ENCODE measurements at regions of chr2 and their contacts with region 1.

Region 1: DNA sequence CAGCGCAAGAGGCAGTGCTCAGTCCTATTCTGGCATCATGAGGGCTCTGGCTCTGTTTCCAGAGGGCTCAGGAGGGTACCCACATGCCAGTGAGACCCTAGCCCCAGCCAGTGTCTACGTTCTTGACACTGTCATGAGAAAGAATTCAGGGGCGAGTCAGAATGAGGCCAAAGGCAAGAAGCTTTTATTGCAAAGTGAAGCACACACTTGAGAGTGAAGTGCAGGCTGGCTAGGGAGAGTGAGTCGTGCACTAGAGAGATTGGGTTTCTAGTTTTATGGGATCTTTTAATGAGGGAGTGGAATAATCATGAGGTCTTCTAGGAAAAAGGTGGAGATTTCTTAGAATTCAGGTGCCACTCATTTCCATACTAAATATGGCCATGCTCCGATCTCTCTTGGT is 164.1 kb downstream of the DCDC2C start:
- DNase-seq: no peak
- ATAC-seq: no peak
- H3K4me3 ChIP-seq: no peak overlapping the region
- H3K27ac ChIP-seq: no peak overlapping the region
- H3K4me1 ChIP-seq: peaks cover 0 to 14% of the 10 kb centered on the region in 2 donors
- H3K27me3 ChIP-seq: no peaks in the 10 kb centered on the region

Region 2: GRCh38 chr2:3814706-3815245 is 52.7 kb before region 1 on chr2:
- intact Hi-C with region 1: no loop called
- DNase-seq: no peak
- ATAC-seq: no peak
- H3K4me3 ChIP-seq: no peak overlapping the region
- H3K27ac ChIP-seq: no peak overlapping the region
- H3K4me1 ChIP-seq: no peaks in the 10 kb centered on the region
- H3K27me3 ChIP-seq: no peaks in the 10 kb centered on the region

Region 3: DNA sequence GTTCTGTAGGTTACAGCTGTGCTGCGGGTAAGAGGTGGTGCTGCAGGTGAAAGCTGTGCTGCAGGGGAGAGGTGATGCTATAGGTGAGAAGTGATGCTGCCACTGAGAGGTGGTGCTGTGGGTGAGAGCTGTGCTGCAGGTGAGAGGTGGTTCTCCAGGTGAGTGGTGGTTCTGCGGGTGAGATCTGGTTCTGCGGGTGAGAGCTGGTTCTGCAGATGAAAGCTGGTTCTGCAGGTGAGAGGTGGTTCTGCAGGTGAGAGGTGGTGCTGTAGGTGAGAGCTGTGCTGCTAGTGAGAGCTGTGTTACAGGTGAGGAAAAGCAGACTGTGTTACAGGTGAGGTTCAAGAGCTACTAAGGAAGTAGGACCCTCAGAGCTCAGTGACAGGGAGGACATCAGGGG is 52.2 kb after region 1 on chr2:
- intact Hi-C with region 1: loop called in 1 of 2 experiments (anchors 2 kb)
- DNase-seq: no peak
- ATAC-seq: no peak
- H3K4me3 ChIP-seq: no peak overlapping the region
- H3K27ac ChIP-seq: no peak overlapping the region
- H3K4me1 ChIP-seq: no peaks in the 10 kb centered on the region
- H3K27me3 ChIP-seq: no peaks in the 10 kb centered on the region